GM18951 (cell line): ENCODE measurements at regions of chr19 and their contacts with region 1.

Region 1: DNA sequence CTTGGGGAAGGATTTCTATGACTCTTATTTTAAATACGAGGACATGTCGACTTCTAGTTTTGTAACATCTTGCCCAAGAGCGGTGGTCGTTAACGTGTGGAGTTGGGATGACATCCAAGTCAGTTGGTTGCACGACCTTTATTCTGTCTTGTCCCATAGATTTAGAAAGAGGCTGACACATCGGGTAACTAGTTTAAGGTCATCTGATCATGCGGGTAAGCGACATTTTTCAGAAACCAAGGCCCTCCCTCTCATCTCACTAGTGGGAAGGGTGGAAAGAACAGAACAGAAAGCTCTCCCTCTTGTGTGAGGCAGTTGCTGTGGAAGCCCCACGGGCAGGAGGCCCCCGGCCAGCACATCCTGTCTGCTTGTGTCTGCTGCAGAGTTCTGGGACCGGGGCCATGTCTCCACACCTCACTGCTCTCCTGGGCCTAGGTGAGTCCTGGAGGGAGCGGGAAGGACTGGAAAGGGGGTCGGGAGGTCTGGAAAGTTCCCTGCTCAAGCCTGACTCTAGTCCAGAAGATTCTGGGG is at the start of gene LAIR2:
- POLR2A ChIP-seq: no peak

Region 2: GRCh38 chr19:54373781-54374631 is 128.6 kb before region 1 on chr19:
- in situ Hi-C with region 1: loop called (anchors 5 kb)
- POLR2A ChIP-seq: no peak